ENCODE measurements at regions of chr12 and their contacts with region 1.

Region 1: GRCh38 chr12:24838531-24838950 is 110.4 kb downstream of the BCAT1 start:
- DNase-seq: peak in 2 of 9 experiments; percentile 9 to 37
- ATAC-seq: no peak
- H3K4me3 ChIP-seq: no peak overlapping the region
- H3K4me3 Mint-ChIP-seq: no peak overlapping the region
- H3K27ac ChIP-seq: no peak overlapping the region
- H3K27ac Mint-ChIP-seq: no peak overlapping the region
- H3K4me1 ChIP-seq: no peaks in the 10 kb centered on the region
- H3K4me1 Mint-ChIP-seq: peaks cover 10% of the 10 kb centered on the region
- H3K27me3 ChIP-seq: no peaks in the 10 kb centered on the region
- H3K27me3 Mint-ChIP-seq: peaks cover 7% of the 10 kb centered on the region
- CTCF ChIP-seq: no peak

Region 2: DNA sequence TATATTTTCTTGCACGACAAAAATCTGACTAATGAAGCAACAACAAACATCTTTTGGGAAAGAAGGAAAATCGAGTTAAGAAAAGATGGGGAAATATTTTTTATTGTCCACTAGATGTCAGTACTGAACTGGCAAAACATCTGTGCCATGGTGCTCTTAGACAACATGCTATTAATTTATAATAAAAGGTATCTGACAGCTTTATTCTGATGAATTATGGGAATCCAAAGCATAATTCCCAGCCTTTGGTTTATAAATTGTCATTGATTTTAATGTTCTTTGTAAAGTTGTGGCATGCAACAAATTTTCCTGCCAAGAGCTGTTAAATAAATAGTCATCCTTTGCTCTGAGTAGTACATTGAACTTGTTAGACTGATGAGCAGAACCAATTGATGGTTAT is 1982.4 kb before region 1 on chr12:
- CTCF ChIA-PET with region 1: no interaction called
- POLR2A ChIA-PET with region 1: no interaction called
- intact Hi-C with region 1: loop called in 1 of 2 experiments (anchors 5 kb)
- DNase-seq: no peak
- ATAC-seq: no peak
- H3K4me3 ChIP-seq: no peak overlapping the region
- H3K4me3 Mint-ChIP-seq: no peak overlapping the region
- H3K27ac ChIP-seq: no peak overlapping the region
- H3K27ac Mint-ChIP-seq: no peak overlapping the region
- H3K4me1 ChIP-seq: no peaks in the 10 kb centered on the region
- H3K4me1 Mint-ChIP-seq: peaks cover 2% of the 10 kb centered on the region
- H3K27me3 ChIP-seq: no peaks in the 10 kb centered on the region
- H3K27me3 Mint-ChIP-seq: peaks cover 7% of the 10 kb centered on the region
- CTCF ChIP-seq: no peak

Region 3: DNA sequence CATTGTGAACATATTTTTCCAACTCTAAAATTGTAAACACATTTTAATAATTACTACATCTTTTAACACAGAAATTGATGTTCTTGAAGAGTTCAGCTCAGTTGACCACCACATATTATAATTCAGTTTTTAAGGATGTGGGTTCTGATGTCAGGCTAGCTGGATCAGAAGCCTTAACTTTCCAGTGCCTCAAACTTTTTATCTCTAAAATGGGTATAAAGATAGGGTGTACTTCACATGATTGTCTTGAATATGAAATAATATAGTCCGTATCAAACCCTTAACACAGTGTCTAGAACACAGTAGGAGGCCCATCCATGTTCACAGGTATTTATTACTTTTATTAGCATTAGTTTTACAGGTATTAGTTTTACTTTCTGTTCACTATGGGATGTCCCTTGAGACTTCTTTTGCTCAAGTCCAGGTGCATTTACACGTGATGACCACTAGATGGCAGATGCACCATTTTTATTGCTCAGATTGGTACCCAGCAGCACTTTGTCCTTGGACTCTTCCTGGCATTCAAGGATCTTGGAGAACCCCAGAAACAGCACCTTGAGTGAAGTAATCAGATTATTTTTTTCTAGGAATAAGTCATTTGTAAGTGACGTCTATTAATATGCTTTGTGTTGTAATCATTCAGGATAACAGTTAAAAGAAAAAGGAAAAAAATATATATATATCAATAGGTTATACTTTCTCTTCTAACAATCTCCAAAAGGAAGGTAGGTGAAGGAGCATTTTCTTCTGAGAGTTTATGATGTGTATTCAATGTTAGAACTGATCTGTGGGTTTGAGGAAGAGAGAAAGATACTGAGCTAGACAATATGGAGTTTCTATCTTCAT is 1633.4 kb before region 1 on chr12:
- CTCF ChIA-PET with region 1: interaction called, 4 read pairs
- POLR2A ChIA-PET with region 1: no interaction called
- intact Hi-C with region 1: loop called in 1 of 2 experiments (anchors 1 kb)
- DNase-seq: peak in 4 of 9 experiments; percentile 7 to 59 (median 30)
- ATAC-seq: peak; percentile 46
- H3K4me3 ChIP-seq: no peak overlapping the region
- H3K4me3 Mint-ChIP-seq: no peak overlapping the region
- H3K27ac ChIP-seq: no peak overlapping the region
- H3K27ac Mint-ChIP-seq: no peak overlapping the region
- H3K4me1 ChIP-seq: no peaks in the 10 kb centered on the region
- H3K4me1 Mint-ChIP-seq: no peaks in the 10 kb centered on the region
- H3K27me3 ChIP-seq: no peaks in the 10 kb centered on the region
- H3K27me3 Mint-ChIP-seq: peaks cover 7% of the 10 kb centered on the region
- CTCF ChIP-seq: peak; percentile 98

Measured in CD8-positive, alpha-beta T cell (primary cell).